Endothelial cell of umbilical vein (primary cell): ENCODE measurements at regions of chr7 and their contacts with region 1.

Region 1: GRCh38 chr7:39453743-39454355 is 112.4 kb upstream of the YAE1 start:
- DNase-seq: peak; percentile 66
- H3K4me3 ChIP-seq: no peak overlapping the region
- H3K27ac ChIP-seq: no peak overlapping the region
- H3K4me1 ChIP-seq: no peaks in the 10 kb centered on the region
- H3K27me3 ChIP-seq: peaks cover 6 to 7% of the 10 kb centered on the region in 2 experiments
- CTCF ChIP-seq: peak; percentile 84 to 90
- POLR2A ChIP-seq: no peak

Region 2: DNA sequence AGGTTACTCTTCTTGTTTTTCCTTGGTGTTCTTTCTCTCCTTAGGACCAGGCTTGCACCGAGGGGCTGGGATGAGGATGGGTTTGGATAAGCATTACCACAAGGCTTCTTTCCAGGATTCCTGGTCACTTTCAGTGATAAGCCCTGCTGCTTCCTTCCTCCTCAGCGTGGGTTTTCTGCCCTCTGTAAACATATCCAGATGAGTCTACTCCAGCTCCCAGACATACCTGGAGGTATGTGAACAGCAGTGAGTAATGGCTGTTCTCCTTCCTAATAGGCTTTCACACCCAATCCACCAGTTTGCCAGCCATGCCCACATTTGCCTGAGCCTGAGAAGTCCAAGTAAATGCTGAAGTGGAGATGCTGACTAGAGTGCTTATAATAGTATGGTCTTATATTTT is 117.4 kb before region 1 on chr7:
- CTCF ChIA-PET with region 1: no interaction called
- POLR2A ChIA-PET with region 1: no interaction called
- dilution Hi-C with region 1: no loop called
- intact Hi-C with region 1: no loop called
- DNase-seq: no peak
- H3K4me3 ChIP-seq: no peak overlapping the region
- H3K27ac ChIP-seq: no peak overlapping the region
- H3K4me1 ChIP-seq: no peaks in the 10 kb centered on the region
- H3K27me3 ChIP-seq: peaks cover 0 to 3% of the 10 kb centered on the region in 2 experiments
- CTCF ChIP-seq: no peak
- POLR2A ChIP-seq: no peak

Region 3: GRCh38 chr7:39433550-39433949 is 20.3 kb before region 1 on chr7:
- CTCF ChIA-PET with region 1: interaction called, 11 read pairs
- POLR2A ChIA-PET with region 1: no interaction called
- dilution Hi-C with region 1: no loop called
- intact Hi-C with region 1: no loop called
- DNase-seq: no peak
- H3K4me3 ChIP-seq: no peak overlapping the region
- H3K27ac ChIP-seq: no peak overlapping the region
- H3K4me1 ChIP-seq: no peaks in the 10 kb centered on the region
- H3K27me3 ChIP-seq: no peaks in the 10 kb centered on the region
- CTCF ChIP-seq: no peak
- POLR2A ChIP-seq: no peak

Region 4: GRCh38 chr7:39465055-39465929 is 11.4 kb after region 1 on chr7:
- CTCF ChIA-PET with region 1: interaction called, 35 read pairs
- POLR2A ChIA-PET with region 1: no interaction called
- dilution Hi-C with region 1: no loop called
- intact Hi-C with region 1: no loop called
- DNase-seq: peak; percentile 26
- H3K4me3 ChIP-seq: no peak overlapping the region
- H3K27ac ChIP-seq: no peak overlapping the region
- H3K4me1 ChIP-seq: no peaks in the 10 kb centered on the region
- H3K27me3 ChIP-seq: peaks cover 3 to 12% of the 10 kb centered on the region in 2 experiments
- CTCF ChIP-seq: peak; percentile 43 to 61
- POLR2A ChIP-seq: no peak

Region 5: GRCh38 chr7:39517240-39517639 is 63.4 kb after region 1 on chr7:
- CTCF ChIA-PET with region 1: interaction called, 17 read pairs
- POLR2A ChIA-PET with region 1: no interaction called
- dilution Hi-C with region 1: no loop called
- intact Hi-C with region 1: loop called (anchors 1 kb)
- DNase-seq: no peak
- H3K4me3 ChIP-seq: no peak overlapping the region
- H3K27ac ChIP-seq: no peak overlapping the region
- H3K4me1 ChIP-seq: no peaks in the 10 kb centered on the region
- H3K27me3 ChIP-seq: peaks cover 2 to 3% of the 10 kb centered on the region in 2 experiments
- CTCF ChIP-seq: no peak
- POLR2A ChIP-seq: no peak